ENCODE measurements at regions of chr2 and their contacts with region 1.

Region 1: GRCh38 chr2:31270136-31270535 is 36.2 kb downstream of the EHD3 start:
- DNase-seq: no peak
- H3K4me3 ChIP-seq: no peak overlapping the region
- H3K27ac ChIP-seq: peak overlapping the region; percentile 69 to 76
- H3K4me1 ChIP-seq: peaks cover 4 to 25% of the 10 kb centered on the region in 2 donors
- H3K27me3 ChIP-seq: no peaks in the 10 kb centered on the region
- CTCF ChIP-seq: no peak

Region 2: DNA sequence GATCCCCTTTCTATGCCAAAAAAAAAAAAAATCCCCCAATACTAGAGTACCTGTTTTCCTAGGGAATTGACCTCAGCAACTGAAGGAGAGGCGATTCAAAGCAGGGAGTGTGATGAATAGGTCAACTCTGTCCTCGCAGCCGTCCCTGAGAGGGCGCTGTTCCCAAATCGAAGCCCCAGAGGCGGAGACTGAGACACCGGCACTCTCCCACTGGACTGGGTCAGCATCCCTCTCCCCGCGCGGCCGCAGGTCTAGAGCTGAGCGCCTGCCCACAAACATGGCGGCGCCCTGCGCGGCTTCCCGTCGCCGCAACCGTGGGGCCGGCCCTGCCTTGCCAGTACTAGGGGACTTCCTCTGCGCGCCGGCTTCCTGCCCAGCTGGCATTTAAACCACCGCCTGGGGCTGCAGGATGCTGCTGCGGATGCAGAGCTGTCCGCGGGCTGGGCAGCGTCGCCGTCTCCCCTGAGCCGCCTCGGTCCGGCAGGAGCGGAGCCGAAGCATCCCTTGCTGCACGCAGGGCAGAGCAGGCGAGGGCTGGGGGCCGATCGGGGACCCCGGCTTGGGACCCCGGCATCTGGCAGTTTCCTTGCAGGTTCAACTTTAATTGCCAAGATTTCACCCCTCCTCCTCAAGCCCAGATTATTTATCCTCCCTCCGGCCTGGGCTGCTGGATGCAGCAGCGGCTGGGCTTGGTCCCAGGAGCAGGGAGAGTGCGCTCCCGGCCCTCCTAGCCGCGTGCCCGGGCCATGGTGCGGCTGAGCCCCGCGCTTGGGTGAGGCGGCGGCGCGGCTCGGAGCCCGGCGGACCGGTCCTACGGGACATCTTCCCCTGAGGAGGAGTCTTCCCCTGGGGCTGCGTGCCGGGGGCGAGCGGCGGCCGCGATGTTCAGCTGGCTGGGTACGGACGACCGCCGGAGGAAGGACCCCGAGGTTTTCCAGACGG is 36.1 kb before region 1 on chr2 and contains the start of gene EHD3:
- intact Hi-C with region 1: loop called (anchors 2 kb)
- DNase-seq: peak; percentile 71 to 95
- H3K4me3 ChIP-seq: peak within 1 kb of the TSS; percentile 55 to 77
- H3K27ac ChIP-seq: peak within 1 kb of the TSS; percentile 82 to 99
- H3K4me1 ChIP-seq: peaks cover 19 to 37% of the 10 kb centered on the region in 2 donors
- H3K27me3 ChIP-seq: no peaks in the 10 kb centered on the region
- CTCF ChIP-seq: peak; percentile 61 to 78 (median 71)
- total RNA-seq, gene EHD3: 22.5 TPM

Region 3: DNA sequence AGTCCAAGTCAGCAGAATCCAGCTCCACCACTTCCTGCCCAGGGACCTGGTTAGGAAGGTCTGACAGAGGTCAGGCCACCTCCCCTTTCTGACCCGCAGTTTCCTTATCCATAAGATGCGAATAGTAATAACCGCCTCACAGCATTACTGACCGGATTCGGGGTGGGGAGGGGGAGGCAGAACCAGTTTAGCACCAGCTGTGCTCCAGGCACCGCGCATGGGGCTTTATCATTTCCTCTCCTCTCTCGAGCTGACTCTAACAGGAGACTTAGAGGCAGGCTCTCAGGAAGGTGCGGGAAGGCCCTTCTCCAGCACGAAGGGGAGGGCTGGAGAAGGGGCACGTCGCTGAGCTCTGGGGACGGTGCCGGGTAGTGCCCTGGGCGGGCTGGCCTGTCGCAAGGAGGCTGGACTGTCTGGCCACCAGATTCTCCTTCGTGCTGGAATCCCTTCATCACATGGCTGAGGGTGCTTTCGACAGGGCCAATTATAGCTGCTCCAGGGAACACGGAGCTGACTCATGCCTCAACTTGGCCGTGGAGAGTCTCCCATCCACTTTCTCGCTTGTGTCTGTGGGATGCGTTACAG is 30.5 kb before region 1 on chr2:
- intact Hi-C with region 1: loop called (anchors 2 kb)
- DNase-seq: peak; percentile 60 to 92
- H3K4me3 ChIP-seq: peak overlapping the region; percentile 8 to 30
- H3K27ac ChIP-seq: peak overlapping the region; percentile 95 to 99
- H3K4me1 ChIP-seq: peaks cover 26 to 46% of the 10 kb centered on the region in 2 donors
- H3K27me3 ChIP-seq: no peaks in the 10 kb centered on the region
- CTCF ChIP-seq: no peak

Region 4: DNA sequence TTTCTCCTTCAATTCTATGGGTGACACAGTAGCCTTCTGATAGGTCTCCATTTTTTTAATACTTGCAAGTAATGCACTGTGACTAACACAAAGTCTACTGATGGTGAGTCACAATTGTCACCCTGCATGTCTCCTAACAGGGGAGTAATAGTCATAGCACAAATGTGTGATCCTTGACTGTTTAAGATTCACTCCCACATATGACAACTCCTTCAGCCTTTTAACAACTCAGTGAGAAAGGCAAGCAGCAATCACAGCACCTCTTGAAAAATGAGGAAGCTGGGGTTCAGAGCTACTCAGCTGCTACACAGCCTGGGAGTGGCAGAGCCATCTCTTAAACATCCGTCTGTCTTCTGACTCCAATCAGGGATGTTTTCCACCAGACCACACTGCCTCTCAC is 27.6 kb after region 1 on chr2:
- intact Hi-C with region 1: loop called (anchors 2 kb)
- DNase-seq: no peak
- H3K4me3 ChIP-seq: no peak overlapping the region
- H3K27ac ChIP-seq: peak overlapping the region; percentile 84 to 86
- H3K4me1 ChIP-seq: peaks cover 10 to 40% of the 10 kb centered on the region in 2 donors
- H3K27me3 ChIP-seq: no peaks in the 10 kb centered on the region
- CTCF ChIP-seq: no peak

Region 5: DNA sequence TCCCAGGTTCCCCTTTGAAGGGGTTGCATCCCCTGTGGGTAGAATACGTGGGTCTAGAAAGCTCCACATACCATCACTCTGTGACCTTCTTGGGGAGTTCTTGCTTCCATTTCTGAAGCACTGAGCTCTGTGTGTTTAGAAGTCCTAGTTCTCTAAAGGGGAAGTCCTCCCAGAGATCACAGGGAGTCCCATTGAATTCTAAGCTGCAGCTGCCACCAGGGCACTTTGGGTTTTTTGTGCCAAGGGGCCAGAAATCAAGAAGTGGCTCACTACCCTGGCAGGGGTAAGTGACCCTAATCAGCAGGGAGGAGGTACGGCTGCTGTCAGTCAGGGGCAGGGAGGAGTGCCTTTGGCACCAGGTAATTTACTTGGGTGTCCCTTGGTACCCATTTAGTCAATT is 34.7 kb after region 1 on chr2:
- intact Hi-C with region 1: loop called (anchors 5 kb)
- DNase-seq: no peak
- H3K4me3 ChIP-seq: no peak overlapping the region
- H3K27ac ChIP-seq: no peak overlapping the region
- H3K4me1 ChIP-seq: peaks cover 4 to 13% of the 10 kb centered on the region in 2 donors
- H3K27me3 ChIP-seq: no peaks in the 10 kb centered on the region
- CTCF ChIP-seq: no peak

Measured in ascending aorta (tissue), 2 donors.